ENCODE measurements at regions of chrX and their contacts with region 1.

Region 1: DNA sequence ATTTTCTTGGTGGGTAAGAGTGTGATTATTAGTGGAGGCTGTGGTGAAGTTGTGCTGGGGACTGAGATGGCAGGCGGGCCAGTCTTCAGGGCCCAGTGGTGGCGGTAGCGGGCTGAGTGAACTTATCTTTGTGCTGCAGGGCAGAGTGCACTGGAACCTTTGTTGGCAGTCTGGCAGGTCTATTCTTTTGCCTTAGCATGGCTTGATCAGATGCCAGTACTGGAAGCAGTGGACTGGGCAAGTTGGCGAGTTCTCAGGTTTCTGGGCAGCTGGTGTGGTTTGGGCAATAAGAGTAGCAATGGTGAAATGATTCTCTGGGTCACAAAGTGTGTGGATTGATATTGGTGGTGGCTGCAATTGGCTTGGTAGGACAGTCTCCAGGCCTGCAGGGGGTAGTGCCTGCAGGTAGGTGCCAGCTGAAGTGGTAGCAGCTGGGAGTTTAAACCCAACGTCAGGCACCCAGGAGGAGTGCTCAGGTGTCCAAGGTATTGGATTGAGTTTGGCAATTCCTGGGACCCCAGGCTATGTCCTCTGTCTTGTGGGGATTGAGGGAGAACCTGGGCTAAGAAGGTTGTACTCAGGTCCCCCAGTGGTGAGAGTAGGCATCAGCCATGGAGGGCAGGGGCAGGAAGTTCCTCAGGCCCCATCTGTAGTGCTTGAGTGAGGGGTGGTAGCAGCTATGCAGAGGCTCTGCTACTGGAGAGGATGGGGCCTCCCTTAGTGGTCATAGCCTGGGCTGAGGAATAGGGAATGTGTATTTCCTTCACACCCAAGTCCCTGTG is 34.9 kb upstream of the SLC25A14 start:
- DNase-seq: no peak
- H3K27ac ChIP-seq: no peak overlapping the region
- CTCF ChIP-seq: no peak

Region 2: DNA sequence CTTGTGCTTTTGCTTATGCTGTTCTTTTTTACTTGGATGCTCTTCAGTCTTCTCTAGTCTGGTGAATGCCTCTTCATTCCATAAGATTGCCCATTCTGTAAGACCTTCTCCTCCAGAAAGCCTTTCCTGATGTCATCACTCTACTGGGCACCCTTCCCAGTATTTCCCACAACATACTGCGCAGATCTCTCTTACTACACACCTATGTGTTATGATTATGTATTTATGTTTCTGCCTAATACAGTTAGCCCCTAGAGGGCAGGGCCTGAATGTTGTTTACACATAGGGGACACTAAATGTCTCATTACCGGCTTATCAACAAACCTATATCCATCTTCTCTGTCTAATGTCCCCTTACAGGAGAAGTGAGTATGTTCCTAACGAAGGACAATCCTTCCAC is 160.3 kb before region 1 on chrX:
- CTCF ChIA-PET with region 1: interaction called, 11 read pairs
- POLR2A ChIA-PET with region 1: no interaction called
- DNase-seq: no peak
- H3K27ac ChIP-seq: no peak overlapping the region
- CTCF ChIP-seq: no peak

Region 3: DNA sequence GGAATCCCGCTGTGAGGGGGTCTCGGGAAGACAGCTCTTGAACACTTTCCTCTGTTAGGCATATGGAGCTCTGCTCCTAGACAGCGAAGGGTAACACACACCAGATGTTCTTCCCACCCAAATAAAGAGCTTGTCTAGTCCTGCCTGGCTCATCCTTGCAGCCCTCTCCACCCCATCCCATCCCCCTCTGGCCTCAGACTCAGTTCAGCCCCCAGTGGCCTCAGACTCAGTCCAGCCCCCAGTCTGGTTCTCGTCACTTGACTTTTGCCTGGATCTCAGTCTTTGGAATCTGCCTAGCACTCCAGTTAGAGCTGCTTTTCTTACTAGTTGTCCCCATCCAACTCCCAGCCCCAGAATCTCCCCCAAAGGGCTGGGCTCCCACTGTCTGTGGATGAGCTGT is 118.1 kb before region 1 on chrX:
- CTCF ChIA-PET with region 1: no interaction called
- POLR2A ChIA-PET with region 1: no interaction called
- DNase-seq: no peak
- H3K27ac ChIP-seq: no peak overlapping the region
- CTCF ChIP-seq: no peak